Ascending aorta (tissue), 2 donors: ENCODE measurements at regions of chr4 and their contacts with region 1.

Region 1: GRCh38 chr4:184745831-184746795 is 12.2 kb upstream of the CENPU start:
- DNase-seq: peak; percentile 17 to 86
- H3K4me3 ChIP-seq: peak overlapping the region in 1 of 2 donors; percentile 36
- H3K27ac ChIP-seq: peak overlapping the region; percentile 74 to 77
- H3K4me1 ChIP-seq: peaks cover 6 to 26% of the 10 kb centered on the region in 2 donors
- H3K27me3 ChIP-seq: no peaks in the 10 kb centered on the region
- CTCF ChIP-seq: peak; percentile 57 to 78 (median 71)

Region 2: GRCh38 chr4:184263910-184264732 is 482.0 kb before region 1 on chr4:
- intact Hi-C with region 1: loop called (anchors 10 kb)
- DNase-seq: peak; percentile 46 to 98
- H3K4me3 ChIP-seq: no peak overlapping the region
- H3K27ac ChIP-seq: no peak overlapping the region
- H3K4me1 ChIP-seq: peaks cover 0 to 2% of the 10 kb centered on the region in 2 donors
- H3K27me3 ChIP-seq: no peaks in the 10 kb centered on the region
- CTCF ChIP-seq: peak; percentile 83 to 92 (median 90)

Region 3: DNA sequence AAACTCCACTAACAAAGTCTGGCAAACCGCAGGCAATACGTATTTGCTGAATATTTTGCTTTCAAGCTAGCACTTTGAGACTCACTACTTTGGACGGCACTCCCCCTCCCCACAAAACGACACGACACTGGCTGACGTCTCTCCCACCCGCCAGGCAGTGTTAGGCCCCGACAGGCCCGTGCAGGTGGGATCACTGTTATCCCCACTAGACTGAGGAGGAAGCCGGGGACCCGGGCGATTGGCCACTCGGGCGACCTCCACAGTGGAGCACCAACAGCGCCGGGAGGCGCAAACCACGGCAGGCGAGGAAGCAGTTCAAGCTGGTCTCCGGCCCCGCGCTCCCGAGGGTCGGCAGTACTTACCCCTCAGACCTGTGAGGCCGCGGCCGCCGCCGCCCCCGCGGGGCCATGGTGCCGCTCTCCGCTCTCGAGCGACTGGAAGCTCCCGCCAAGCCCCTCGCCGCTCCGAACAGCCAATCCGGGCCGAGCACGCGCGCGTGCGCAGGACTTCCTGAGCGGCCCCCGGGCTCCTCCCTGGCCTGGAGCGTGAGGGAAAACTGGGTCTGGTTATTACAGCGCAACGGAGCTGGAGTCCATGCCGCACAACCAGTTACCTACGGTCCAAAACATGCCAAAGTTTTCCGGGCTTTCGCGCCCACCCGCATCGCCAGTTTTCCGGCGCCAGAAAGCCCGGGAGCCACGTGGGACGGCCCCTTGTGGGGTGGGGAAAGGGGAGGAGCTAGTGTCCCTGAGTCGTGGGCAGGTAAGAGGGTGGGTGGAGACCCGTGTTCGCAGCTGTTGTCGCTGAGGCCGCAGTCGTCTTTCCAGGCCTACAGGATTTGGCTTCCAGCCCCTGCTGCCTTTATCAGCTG is 12.2 kb before region 1 on chr4 and contains the start of gene CENPU:
- intact Hi-C with region 1: loop called (anchors 1 kb)
- DNase-seq: peak; percentile 87 to 98
- H3K4me3 ChIP-seq: peak within 1 kb of the TSS; percentile 68 to 91
- H3K27ac ChIP-seq: peak within 1 kb of the TSS in 1 of 2 donors; percentile 58
- H3K4me1 ChIP-seq: peaks cover 0 to 8% of the 10 kb centered on the region in 2 donors
- H3K27me3 ChIP-seq: no peaks in the 10 kb centered on the region
- CTCF ChIP-seq: no peak
- total RNA-seq, gene CENPU: not detected

Region 4: DNA sequence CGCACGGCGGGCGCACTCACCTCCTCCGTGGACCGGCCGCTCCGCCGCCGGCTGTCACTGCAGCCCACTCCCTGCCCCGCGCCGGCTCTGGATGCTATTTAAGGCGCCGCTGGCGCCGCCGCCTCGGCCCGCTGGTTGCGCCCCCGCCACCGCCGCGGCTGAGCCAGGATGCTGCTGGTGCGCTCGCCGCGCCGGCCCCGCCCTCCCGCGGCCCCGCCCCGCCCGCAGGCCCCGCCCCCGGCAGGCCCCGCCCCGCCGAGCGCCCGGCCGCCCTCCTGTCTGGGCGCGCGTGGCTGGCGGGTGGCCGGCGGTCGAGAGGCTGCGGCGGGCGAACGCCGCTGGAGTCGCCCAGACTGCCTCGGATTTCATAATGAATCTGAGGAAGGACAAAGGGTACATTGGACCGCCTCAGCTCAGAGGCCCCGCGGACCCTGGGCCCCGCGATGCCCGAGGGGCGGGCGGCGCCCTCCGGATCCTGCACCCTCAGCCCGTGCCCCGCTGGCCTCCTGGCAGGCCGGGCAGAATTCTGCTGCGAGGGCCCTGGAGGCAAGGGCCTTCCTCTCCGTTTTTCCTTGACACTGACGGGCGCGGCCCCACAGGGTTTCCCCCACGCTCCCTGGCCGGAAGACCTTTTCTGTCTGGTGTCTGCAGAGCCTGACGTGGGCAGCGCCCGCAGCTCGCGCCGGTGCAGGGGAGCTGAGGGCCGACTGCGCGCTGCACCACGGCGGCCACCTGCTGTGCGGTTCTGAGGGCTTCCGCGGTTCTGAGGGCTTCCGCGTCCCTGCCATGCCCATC is 80.0 kb after region 1 on chr4 and contains the start of gene ACSL1:
- intact Hi-C with region 1: loop called (anchors 5 kb)
- DNase-seq: peak; percentile 66 to 93
- H3K4me3 ChIP-seq: peak within 1 kb of the TSS; percentile 80 to 90
- H3K27ac ChIP-seq: peak within 1 kb of the TSS; percentile 76 to 85
- H3K4me1 ChIP-seq: peaks cover 0 to 10% of the 10 kb centered on the region in 2 donors
- H3K27me3 ChIP-seq: no peaks in the 10 kb centered on the region
- CTCF ChIP-seq: peak in 1 of 3 experiments; percentile 26
- total RNA-seq, gene ACSL1: 31.8 TPM

Region 5: DNA sequence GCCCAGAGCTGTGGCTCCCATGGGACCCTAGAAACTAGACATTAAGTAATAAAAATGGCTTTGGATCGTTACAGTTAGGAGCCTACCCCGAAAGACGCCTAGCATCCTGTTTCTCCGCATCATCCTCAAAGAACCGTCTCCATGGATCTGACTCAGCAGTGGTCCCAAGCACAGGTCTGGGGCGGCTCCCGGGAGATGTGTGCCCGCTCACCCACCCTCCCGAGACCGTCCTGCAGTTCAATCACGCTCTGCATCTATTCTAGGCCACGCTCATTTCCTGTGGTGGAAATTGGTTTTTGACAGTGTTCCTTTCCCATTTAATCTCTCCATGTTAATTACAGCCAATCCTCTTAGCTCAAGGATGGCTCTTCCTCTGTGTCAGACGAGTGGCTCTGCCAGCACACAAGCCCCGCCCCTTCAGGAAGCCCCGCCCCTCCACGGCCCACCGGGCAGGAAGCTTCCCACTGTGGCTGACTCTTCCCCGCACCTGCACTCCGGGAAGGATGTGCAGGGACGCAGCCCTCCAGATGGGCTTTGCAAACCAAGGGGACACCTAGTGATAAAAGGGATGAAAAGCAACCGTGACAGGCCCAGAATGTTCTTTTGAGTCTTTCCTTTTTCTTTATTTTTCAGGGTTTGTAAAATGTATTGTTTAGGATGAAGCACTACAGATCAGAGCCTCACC is 237.7 kb after region 1 on chr4:
- intact Hi-C with region 1: loop called (anchors 1 kb)
- DNase-seq: no peak
- H3K4me3 ChIP-seq: no peak overlapping the region
- H3K27ac ChIP-seq: no peak overlapping the region
- H3K4me1 ChIP-seq: no peaks in the 10 kb centered on the region
- H3K27me3 ChIP-seq: no peaks in the 10 kb centered on the region
- CTCF ChIP-seq: peak in 1 of 3 experiments; percentile 15

Region 6: GRCh38 chr4:185005216-185005819 is 259.2 kb after region 1 on chr4:
- intact Hi-C with region 1: loop called (anchors 1 kb)
- DNase-seq: peak; percentile 38 to 90
- H3K4me3 ChIP-seq: peak overlapping the region; percentile 16 to 48
- H3K27ac ChIP-seq: no peak overlapping the region
- H3K4me1 ChIP-seq: no peaks in the 10 kb centered on the region
- H3K27me3 ChIP-seq: no peaks in the 10 kb centered on the region
- CTCF ChIP-seq: peak; percentile 62 to 95 (median 95)

Region 7: GRCh38 chr4:185020293-185020808 is 274.2 kb after region 1 on chr4:
- intact Hi-C with region 1: no loop called
- DNase-seq: no peak
- H3K4me3 ChIP-seq: peak overlapping the region; percentile 42 to 58
- H3K27ac ChIP-seq: no peak overlapping the region
- H3K4me1 ChIP-seq: peaks cover 3 to 23% of the 10 kb centered on the region in 2 donors
- H3K27me3 ChIP-seq: peaks cover 14% of the 10 kb centered on the region
- CTCF ChIP-seq: no peak

Region 8: GRCh38 chr4:185096032-185096653 is 350.0 kb after region 1 on chr4:
- intact Hi-C with region 1: loop called (anchors 5 kb)
- DNase-seq: no peak
- H3K4me3 ChIP-seq: no peak overlapping the region
- H3K27ac ChIP-seq: no peak overlapping the region
- H3K4me1 ChIP-seq: no peaks in the 10 kb centered on the region
- H3K27me3 ChIP-seq: no peaks in the 10 kb centered on the region
- CTCF ChIP-seq: peak; percentile 43 to 63 (median 45)